ENCODE measurements at regions of chr5 and their contacts with region 1.

Region 1: GRCh38 chr5:73381590-73382400 is 66.8 kb downstream of the FOXD1 start:
- DNase-seq: no peak
- H3K4me3 ChIP-seq: no peak overlapping the region
- CTCF ChIP-seq: no peak

Region 2: GRCh38 chr5:73327908-73328455 is 53.8 kb before region 1 on chr5:
- in situ Hi-C with region 1: no loop called
- DNase-seq: no peak
- H3K4me3 ChIP-seq: no peak overlapping the region
- CTCF ChIP-seq: no peak

Region 3: GRCh38 chr5:73419465-73420390 is 37.9 kb after region 1 on chr5:
- in situ Hi-C with region 1: loop called (anchors 5 kb)
- DNase-seq: peak; percentile 91
- H3K4me3 ChIP-seq: peak overlapping the region; percentile 14
- CTCF ChIP-seq: no peak